A673 (cell line): ENCODE measurements at regions of chr6 and their contacts with region 1.

Region 1: GRCh38 chr6:27753668-27754407 is 158.4 kb downstream of the OR2B2 start:
- DNase-seq: peak; percentile 97
- H3K4me3 ChIP-seq: peak overlapping the region; percentile 68
- H3K27ac ChIP-seq: no peak overlapping the region
- H3K4me1 ChIP-seq: no peaks in the 10 kb centered on the region
- H3K27me3 ChIP-seq: no peaks in the 10 kb centered on the region
- CTCF ChIP-seq: 0 out of 2 replicates have a peak, but pooled peaks have one; percentile 25

Region 2: GRCh38 chr6:27188885-27189418 is 564.9 kb before region 1 on chr6:
- CTCF ChIA-PET with region 1: no interaction called
- POLR2A ChIA-PET with region 1: no interaction called
- intact Hi-C with region 1: loop called (anchors 1 kb)
- DNase-seq: peak; percentile 87
- H3K4me3 ChIP-seq: peak overlapping the region; percentile 59
- H3K27ac ChIP-seq: peak overlapping the region; percentile 5
- H3K4me1 ChIP-seq: no peaks in the 10 kb centered on the region
- H3K27me3 ChIP-seq: no peaks in the 10 kb centered on the region
- CTCF ChIP-seq: peak; percentile 67

Region 3: GRCh38 chr6:27205375-27206278 is 548.2 kb before region 1 on chr6:
- CTCF ChIA-PET with region 1: no interaction called
- POLR2A ChIA-PET with region 1: no interaction called
- intact Hi-C with region 1: no loop called
- DNase-seq: no peak
- H3K4me3 ChIP-seq: no peak overlapping the region
- H3K27ac ChIP-seq: no peak overlapping the region
- H3K4me1 ChIP-seq: no peaks in the 10 kb centered on the region
- H3K27me3 ChIP-seq: no peaks in the 10 kb centered on the region
- CTCF ChIP-seq: no peak

Region 4: DNA sequence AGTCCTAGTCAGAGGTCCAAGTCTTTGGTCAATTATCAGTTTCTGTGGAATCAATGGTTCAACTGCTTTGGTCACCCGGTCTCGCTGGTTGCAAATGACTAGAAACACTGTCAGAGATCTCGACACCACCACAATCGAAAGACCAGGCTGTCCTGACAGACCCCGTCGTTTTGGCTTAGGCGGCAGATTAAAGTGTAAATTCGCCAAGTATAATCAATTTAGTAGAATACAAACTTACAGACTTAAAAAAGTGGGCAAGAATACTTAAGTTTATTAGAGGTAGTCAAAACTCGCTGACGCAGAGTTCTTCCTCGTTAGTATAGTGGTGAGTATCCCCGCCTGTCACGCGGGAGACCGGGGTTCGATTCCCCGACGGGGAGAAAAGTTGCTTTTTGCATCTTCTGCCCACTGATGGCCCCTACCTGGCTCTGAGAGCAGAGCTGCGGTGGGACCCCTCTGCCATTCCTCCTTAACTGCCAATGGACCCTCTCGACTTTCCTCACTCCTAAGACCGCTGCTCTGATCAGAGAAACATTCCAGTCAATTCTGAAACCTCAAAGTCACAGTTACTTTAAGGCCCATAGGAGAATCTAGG is 250.3 kb before region 1 on chr6:
- CTCF ChIA-PET with region 1: interaction called, 3 read pairs
- POLR2A ChIA-PET with region 1: no interaction called
- intact Hi-C with region 1: loop called (anchors 2 kb)
- DNase-seq: peak; percentile 85
- H3K4me3 ChIP-seq: peak overlapping the region; percentile 56
- H3K27ac ChIP-seq: no peak overlapping the region
- H3K4me1 ChIP-seq: no peaks in the 10 kb centered on the region
- H3K27me3 ChIP-seq: no peaks in the 10 kb centered on the region
- CTCF ChIP-seq: no peak

Region 5: GRCh38 chr6:27518881-27519795 is 234.7 kb before region 1 on chr6:
- CTCF ChIA-PET with region 1: interaction called, 14 read pairs
- POLR2A ChIA-PET with region 1: interaction called, 3 read pairs
- intact Hi-C with region 1: loop called (anchors 1 kb)
- DNase-seq: peak; percentile 92
- H3K4me3 ChIP-seq: peak overlapping the region; percentile 70
- H3K27ac ChIP-seq: peak overlapping the region; percentile 77
- H3K4me1 ChIP-seq: peaks cover 7% of the 10 kb centered on the region
- H3K27me3 ChIP-seq: peaks cover 10% of the 10 kb centered on the region
- CTCF ChIP-seq: peak; percentile 75

Region 6: GRCh38 chr6:28747631-28748157 is 993.9 kb after region 1 on chr6:
- CTCF ChIA-PET with region 1: interaction called, 11 read pairs
- POLR2A ChIA-PET with region 1: no interaction called
- intact Hi-C with region 1: no loop called
- DNase-seq: peak; percentile 97
- H3K4me3 ChIP-seq: peak overlapping the region; percentile 42
- H3K27ac ChIP-seq: no peak overlapping the region
- H3K4me1 ChIP-seq: no peaks in the 10 kb centered on the region
- H3K27me3 ChIP-seq: no peaks in the 10 kb centered on the region
- CTCF ChIP-seq: no peak